ENCODE measurements at regions of chr6 and their contacts with region 1.

Region 1: GRCh38 chr6:11277275-11278206 is 45.1 kb upstream of the NEDD9 start:
- DNase-seq: no peak
- ATAC-seq: peak in 2 of 4 donors; percentile 12 to 19
- H3K4me3 ChIP-seq: no peak overlapping the region
- H3K27ac ChIP-seq: no peak overlapping the region
- H3K4me1 ChIP-seq: peaks cover 0 to 12% (median 0%) of the 10 kb centered on the region in 4 donors
- H3K27me3 ChIP-seq: no peaks in the 10 kb centered on the region
- CTCF ChIP-seq: no peak
- POLR2A ChIP-seq: no peak

Region 2: DNA sequence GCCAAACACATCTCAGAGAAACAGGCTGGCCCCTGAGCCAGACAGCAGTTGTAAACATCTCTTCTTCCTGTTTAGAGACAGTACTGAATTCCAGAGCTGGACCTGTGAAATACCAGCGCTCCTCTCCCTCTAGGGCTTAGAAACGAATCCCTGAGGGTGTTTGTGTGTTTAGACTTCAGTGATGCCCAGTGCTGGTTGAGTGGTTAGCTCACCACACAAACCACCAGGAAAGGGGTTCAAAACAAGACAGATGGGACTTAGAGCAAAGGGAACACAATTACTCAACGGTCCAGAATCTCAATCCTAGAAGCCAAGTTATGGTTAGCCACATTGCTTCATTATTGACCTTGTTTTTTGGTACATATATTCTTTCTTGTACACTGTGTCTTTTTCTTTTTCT is 151.4 kb after region 1 on chr6:
- intact Hi-C with region 1: loop called in 1 of 2 experiments (anchors 5 kb)
- DNase-seq: no peak
- ATAC-seq: peak; percentile 25 to 66 (median 30)
- H3K4me3 ChIP-seq: no peak overlapping the region
- H3K27ac ChIP-seq: peak overlapping the region in 1 of 3 donors; percentile 24
- H3K4me1 ChIP-seq: peaks cover 0 to 9% (median 2%) of the 10 kb centered on the region in 4 donors
- H3K27me3 ChIP-seq: no peaks in the 10 kb centered on the region
- CTCF ChIP-seq: no peak
- POLR2A ChIP-seq: no peak

Measured in right lobe of liver (tissue), 6 donors.